ENCODE measurements at regions of chr4 and their contacts with region 1.

Region 1: GRCh38 chr4:82823062-82823461 is 24.5 kb upstream of the SCD5 start:
- DNase-seq: no peak
- ATAC-seq: no peak

Region 2: GRCh38 chr4:82721819-82722423 is 101.1 kb before region 1 on chr4:
- intact Hi-C with region 1: no loop called
- DNase-seq: peak; percentile 49
- ATAC-seq: peak; percentile 66

Region 3: GRCh38 chr4:82865592-82865991 is 42.5 kb after region 1 on chr4:
- intact Hi-C with region 1: loop called (anchors 10 kb)
- DNase-seq: no peak
- ATAC-seq: peak; percentile 23

Region 4: GRCh38 chr4:83369831-83370639 is 547.0 kb after region 1 on chr4:
- intact Hi-C with region 1: no loop called
- DNase-seq: no peak
- ATAC-seq: peak; percentile 52